MCF 10A (cell line): ENCODE measurements at regions of chr1 and their contacts with region 1.

Region 1: DNA sequence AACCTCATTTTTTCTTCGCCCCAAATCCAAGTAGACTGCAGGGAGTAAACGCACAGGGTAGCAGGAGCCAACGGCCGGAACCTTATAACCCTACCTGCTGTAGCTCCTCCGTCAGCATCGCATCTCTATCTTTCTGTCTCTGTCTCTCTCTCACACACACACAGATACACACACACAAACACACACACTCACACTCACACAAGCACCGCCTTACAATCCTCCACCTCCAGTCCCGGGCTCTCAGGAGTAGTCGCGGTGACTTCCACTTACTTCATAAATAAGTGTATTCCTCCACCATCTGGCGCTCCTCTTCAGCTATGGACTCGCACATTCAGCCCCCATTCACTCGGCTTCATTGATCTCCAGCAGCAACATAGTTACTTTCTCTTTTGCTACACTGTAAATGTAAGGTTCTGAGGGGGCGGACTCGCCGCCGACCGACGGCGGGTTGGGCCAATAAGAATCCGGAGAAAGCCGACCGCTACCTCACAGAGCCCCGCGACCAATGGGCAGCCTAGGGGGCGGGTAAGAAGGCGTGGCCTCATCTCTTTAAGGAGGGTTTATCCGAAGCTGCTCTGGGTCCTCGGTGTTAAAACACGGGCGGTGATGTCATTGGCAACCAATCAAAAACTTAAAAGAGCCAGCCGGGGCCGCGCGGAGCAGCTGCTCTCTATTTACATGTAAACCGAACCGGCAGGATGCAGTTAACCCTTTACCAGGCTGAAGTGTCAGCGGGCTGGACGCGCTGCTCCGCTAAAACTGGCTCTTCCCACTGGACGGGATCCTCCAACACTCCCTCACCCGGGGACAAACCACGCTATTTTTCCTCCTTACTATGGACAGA is at the start of gene DUSP10:
- DNase-seq: peak; percentile 100
- H3K4me3 Mint-ChIP-seq: no peak within 1 kb of the TSS
- H3K27ac Mint-ChIP-seq: no peak within 1 kb of the TSS
- H3K4me1 Mint-ChIP-seq: peaks cover 25% of the 10 kb centered on the region
- H3K27me3 Mint-ChIP-seq: no peaks in the 10 kb centered on the region
- CTCF ChIP-seq: no peak
- total RNA-seq, gene DUSP10: 15.9 and 22.0 TPM in 2 replicates

Region 2: DNA sequence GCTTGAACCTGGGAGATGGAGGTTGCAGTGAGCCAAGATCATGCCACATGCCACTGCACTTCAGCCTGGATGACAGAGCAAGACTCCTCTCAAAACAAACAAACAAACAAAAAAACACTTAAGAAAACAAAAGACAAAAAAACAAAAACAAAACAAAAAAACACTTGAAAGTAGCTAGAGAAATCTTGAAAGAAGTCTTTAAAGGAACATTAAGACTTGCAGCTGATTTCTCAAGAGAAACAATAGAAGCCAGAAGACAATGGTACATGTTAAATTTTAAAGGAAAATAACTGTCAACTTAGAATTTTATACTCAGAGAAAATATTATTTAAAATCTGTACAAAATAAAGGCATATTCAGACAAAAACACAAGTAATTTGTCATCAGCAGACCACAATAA is 791.4 kb before region 1 on chr1:
- CTCF ChIA-PET with region 1: no interaction called
- POLR2A ChIA-PET with region 1: no interaction called
- intact Hi-C with region 1: no loop called
- DNase-seq: peak; percentile 40
- H3K4me3 Mint-ChIP-seq: no peak overlapping the region
- H3K27ac Mint-ChIP-seq: no peak overlapping the region
- H3K4me1 Mint-ChIP-seq: no peaks in the 10 kb centered on the region
- H3K27me3 Mint-ChIP-seq: no peaks in the 10 kb centered on the region
- CTCF ChIP-seq: no peak

Region 3: GRCh38 chr1:221478050-221478949 is 263.6 kb before region 1 on chr1:
- CTCF ChIA-PET with region 1: interaction called, 100 read pairs
- POLR2A ChIA-PET with region 1: interaction called, 64 read pairs
- intact Hi-C with region 1: loop called (anchors 1 kb)
- DNase-seq: peak; percentile 96
- H3K4me3 Mint-ChIP-seq: no peak overlapping the region
- H3K27ac Mint-ChIP-seq: no peak overlapping the region
- H3K4me1 Mint-ChIP-seq: no peaks in the 10 kb centered on the region
- H3K27me3 Mint-ChIP-seq: no peaks in the 10 kb centered on the region
- CTCF ChIP-seq: peak; percentile 99

Region 4: DNA sequence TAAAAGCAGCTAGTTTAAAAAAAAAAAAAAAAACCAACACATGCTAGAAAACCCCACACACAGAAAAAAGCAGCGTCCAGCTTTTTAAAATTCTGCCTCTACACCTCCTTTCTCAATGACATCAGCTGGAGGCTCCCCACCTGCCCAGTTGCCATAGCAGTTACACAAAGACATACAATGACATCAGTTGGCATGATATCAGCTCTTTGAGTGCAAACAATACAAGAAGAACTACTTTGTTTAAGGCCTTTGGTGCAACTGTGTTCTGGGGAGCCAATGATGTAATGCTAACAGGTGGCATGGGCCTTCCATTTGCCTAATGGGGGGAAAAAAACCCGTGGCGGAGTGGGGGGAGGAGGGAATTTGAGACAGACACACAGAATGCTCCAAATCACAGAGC is 32.9 kb before region 1 on chr1:
- CTCF ChIA-PET with region 1: interaction called, 4 read pairs
- POLR2A ChIA-PET with region 1: interaction called, 18 read pairs
- intact Hi-C with region 1: no loop called
- DNase-seq: peak; percentile 63
- H3K4me3 Mint-ChIP-seq: no peak overlapping the region
- H3K27ac Mint-ChIP-seq: peak overlapping the region; percentile 50
- H3K4me1 Mint-ChIP-seq: peaks cover 26% of the 10 kb centered on the region
- H3K27me3 Mint-ChIP-seq: no peaks in the 10 kb centered on the region
- CTCF ChIP-seq: no peak

Region 5: DNA sequence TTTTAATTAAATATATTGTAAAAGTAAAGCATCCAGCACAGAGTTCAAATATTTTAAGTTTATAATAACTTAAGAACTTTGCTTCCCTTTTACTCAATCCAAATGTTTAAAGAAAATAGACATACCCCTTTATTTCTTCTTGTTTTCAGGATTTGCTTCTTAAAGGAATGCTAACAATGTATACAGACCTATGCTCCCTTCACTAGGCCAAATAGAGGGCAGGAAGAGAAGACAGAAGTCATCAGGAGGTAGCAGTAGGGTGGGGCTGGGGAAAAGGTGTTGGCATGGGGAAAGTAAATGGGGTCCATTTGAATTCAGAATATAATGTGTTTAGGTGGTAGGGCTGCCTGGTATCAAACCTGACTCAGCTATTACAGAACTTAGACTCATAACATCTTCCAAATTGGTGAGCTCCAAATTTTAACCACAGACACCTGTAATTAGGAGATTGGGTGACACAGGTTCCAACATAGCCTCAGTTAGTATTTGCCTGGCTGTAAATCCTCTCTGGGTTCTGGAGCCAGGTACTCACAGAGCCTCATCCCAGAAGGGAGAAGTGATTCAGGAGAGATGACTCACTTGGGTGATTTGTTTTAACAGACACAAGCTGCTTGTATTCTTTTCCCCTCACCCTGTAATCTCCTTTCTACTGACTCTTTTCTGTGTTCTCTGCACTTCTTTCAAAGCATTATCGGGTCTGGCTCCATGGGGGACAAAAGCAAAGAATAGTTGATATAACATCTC is 60.0 kb after region 1 on chr1:
- CTCF ChIA-PET with region 1: interaction called, 6 read pairs
- POLR2A ChIA-PET with region 1: interaction called, 21 read pairs
- intact Hi-C with region 1: no loop called
- DNase-seq: peak; percentile 87
- H3K4me3 Mint-ChIP-seq: no peak overlapping the region
- H3K27ac Mint-ChIP-seq: peak overlapping the region; percentile 63
- H3K4me1 Mint-ChIP-seq: peaks cover 18% of the 10 kb centered on the region
- H3K27me3 Mint-ChIP-seq: no peaks in the 10 kb centered on the region
- CTCF ChIP-seq: no peak

Region 6: DNA sequence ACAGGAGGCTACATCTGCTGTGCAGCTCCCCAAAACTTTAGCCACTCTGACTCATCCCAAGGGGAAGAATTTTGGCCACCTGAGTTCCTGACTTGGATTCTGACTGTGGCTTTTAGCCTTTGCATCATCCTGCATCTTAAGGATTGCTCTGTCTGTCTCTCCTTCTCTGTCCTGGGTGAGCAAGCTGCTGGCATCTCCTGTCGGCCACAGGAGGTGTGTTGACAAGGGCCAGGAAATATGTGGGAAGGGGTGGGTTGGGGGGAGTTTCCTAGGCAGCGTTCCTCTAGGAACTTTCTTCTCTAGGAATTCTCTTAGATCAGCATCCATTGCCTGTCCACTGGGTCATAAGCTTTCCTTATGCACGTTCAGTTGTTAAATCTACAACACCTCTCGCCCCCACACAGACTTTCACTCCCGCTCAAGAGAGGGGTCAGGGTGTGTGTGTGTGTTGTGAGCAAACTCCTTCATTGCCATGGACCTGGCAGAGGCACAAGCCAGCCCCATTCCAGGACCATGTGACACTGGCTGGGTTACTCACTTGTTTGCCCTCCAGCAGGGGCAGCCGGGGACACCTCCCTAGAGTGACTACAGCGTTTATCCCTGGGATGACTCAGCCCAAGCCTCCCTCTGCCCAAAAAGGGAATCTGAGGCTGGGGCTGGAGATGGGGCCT is 144.9 kb after region 1 on chr1:
- CTCF ChIA-PET with region 1: interaction called, 104 read pairs
- POLR2A ChIA-PET with region 1: interaction called, 105 read pairs
- intact Hi-C with region 1: loop called (anchors 1 kb)
- DNase-seq: peak; percentile 99
- H3K4me3 Mint-ChIP-seq: peak overlapping the region; percentile 55
- H3K27ac Mint-ChIP-seq: peak overlapping the region; percentile 85
- H3K4me1 Mint-ChIP-seq: peaks cover 60% of the 10 kb centered on the region
- H3K27me3 Mint-ChIP-seq: no peaks in the 10 kb centered on the region
- CTCF ChIP-seq: peak; percentile 11

Region 7: DNA sequence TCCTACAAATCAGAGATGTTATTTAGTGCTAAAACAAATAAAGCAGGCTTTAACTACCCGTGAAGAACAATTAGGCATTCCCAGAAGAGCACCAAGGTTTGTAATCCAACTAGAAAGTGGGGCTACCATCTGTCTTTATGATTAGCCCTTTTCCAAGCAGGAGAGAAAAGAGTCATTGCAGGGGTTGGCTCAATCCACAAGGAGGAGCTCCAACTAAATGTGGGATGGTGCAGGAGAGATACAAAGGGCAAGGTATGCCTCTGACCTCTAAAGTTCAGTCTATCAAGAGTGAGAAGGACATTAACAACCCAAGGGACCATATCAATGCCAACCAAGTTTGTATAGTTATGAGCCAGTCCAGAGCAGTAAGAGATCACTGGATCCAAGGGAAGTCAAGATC is 382.7 kb after region 1 on chr1:
- CTCF ChIA-PET with region 1: interaction called, 3 read pairs
- POLR2A ChIA-PET with region 1: interaction called, 3 read pairs
- intact Hi-C with region 1: loop called (anchors 5 kb)
- DNase-seq: peak; percentile 64
- H3K4me3 Mint-ChIP-seq: no peak overlapping the region
- H3K27ac Mint-ChIP-seq: no peak overlapping the region
- H3K4me1 Mint-ChIP-seq: no peaks in the 10 kb centered on the region
- H3K27me3 Mint-ChIP-seq: no peaks in the 10 kb centered on the region
- CTCF ChIP-seq: peak; percentile 58

Region 8: DNA sequence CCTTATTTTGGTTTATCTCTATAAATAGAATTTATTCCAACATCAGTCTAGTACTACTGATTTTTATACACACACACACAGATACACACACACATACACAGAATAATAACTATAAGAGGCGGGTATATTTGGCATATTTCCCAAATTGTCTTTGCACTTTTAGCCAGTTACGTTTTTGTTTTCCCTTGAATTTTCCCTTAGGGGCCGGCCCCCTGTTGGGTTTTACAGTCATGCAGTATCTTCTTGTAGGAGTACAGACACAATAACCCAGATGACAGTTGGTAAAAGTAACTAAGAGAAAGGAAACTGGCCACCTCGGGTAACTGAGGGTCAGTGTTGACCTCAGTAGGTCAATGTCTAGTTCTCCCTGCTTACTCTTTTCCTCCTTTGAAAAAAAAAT is 1123.8 kb after region 1 on chr1:
- CTCF ChIA-PET with region 1: no interaction called
- POLR2A ChIA-PET with region 1: no interaction called
- intact Hi-C with region 1: no loop called
- DNase-seq: no peak
- H3K4me3 Mint-ChIP-seq: no peak overlapping the region
- H3K27ac Mint-ChIP-seq: no peak overlapping the region
- H3K4me1 Mint-ChIP-seq: no peaks in the 10 kb centered on the region
- H3K27me3 Mint-ChIP-seq: no peaks in the 10 kb centered on the region
- CTCF ChIP-seq: no peak